ENCODE measurements at regions of chr6 and their contacts with region 1.

Region 1: DNA sequence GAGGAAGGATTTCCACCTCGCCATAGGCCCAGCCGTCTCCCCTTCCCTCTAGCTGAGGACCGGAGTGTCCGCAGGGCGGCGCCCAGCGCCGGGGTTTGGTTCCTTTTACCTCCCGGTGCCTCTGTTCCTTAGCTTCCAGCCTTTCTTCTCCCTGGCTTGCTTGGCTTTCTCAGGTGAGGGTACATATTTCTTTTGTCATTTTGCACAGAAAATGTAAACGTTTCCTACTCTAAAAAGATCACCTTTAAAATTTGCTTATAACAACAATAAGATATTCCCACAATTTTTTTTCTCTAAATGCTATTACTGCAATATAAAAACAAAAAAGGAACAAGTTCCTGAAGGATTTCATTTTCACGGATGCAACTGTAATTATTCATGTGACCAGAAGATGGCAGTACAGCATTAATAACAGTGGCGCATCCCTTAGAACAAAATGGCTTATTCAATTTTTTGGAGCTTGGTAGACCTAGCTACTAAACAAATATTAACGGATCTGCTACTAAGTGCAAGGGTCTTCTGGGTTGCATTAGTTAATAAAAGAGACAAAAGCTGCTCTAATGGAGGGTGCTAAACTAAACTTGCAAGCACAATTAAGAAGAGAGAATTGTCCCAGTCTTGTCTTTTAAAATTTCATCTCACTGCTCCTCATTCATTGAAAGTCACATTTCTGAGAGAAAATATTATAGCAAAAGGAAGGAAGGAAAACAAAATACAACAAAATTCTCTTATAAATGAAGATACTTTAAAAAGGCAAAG is 172.9 kb downstream of the ADGRG6 start:
- DNase-seq: peak in 2 of 9 experiments; percentile 51 to 64
- ATAC-seq: peak; percentile 51
- H3K4me3 ChIP-seq: no peak overlapping the region
- H3K4me3 Mint-ChIP-seq: no peak overlapping the region
- H3K27ac ChIP-seq: no peak overlapping the region
- H3K27ac Mint-ChIP-seq: no peak overlapping the region
- H3K4me1 ChIP-seq: no peaks in the 10 kb centered on the region
- H3K4me1 Mint-ChIP-seq: peaks cover 1% of the 10 kb centered on the region
- H3K27me3 ChIP-seq: no peaks in the 10 kb centered on the region
- H3K27me3 Mint-ChIP-seq: no peaks in the 10 kb centered on the region
- CTCF ChIP-seq: peak; percentile 98

Region 2: GRCh38 chr6:142459271-142459670 is 15.4 kb before region 1 on chr6:
- CTCF ChIA-PET with region 1: interaction called, 10 read pairs
- POLR2A ChIA-PET with region 1: no interaction called
- intact Hi-C with region 1: no loop called
- DNase-seq: no peak
- ATAC-seq: no peak
- H3K4me3 ChIP-seq: no peak overlapping the region
- H3K4me3 Mint-ChIP-seq: no peak overlapping the region
- H3K27ac ChIP-seq: no peak overlapping the region
- H3K27ac Mint-ChIP-seq: no peak overlapping the region
- H3K4me1 ChIP-seq: no peaks in the 10 kb centered on the region
- H3K4me1 Mint-ChIP-seq: no peaks in the 10 kb centered on the region
- H3K27me3 ChIP-seq: no peaks in the 10 kb centered on the region
- H3K27me3 Mint-ChIP-seq: peaks cover 3% of the 10 kb centered on the region
- CTCF ChIP-seq: no peak

Region 3: GRCh38 chr6:142686507-142686887 is 211.8 kb after region 1 on chr6:
- CTCF ChIA-PET with region 1: interaction called, 8 read pairs
- POLR2A ChIA-PET with region 1: no interaction called
- intact Hi-C with region 1: loop called in 1 of 2 experiments (anchors 5 kb)
- DNase-seq: no peak
- ATAC-seq: peak; percentile 19
- H3K4me3 ChIP-seq: no peak overlapping the region
- H3K4me3 Mint-ChIP-seq: peak overlapping the region; percentile 30
- H3K27ac ChIP-seq: no peak overlapping the region
- H3K27ac Mint-ChIP-seq: peak overlapping the region; percentile 72
- H3K4me1 ChIP-seq: peaks cover 18% of the 10 kb centered on the region
- H3K4me1 Mint-ChIP-seq: peaks cover 22% of the 10 kb centered on the region
- H3K27me3 ChIP-seq: no peaks in the 10 kb centered on the region
- H3K27me3 Mint-ChIP-seq: no peaks in the 10 kb centered on the region
- CTCF ChIP-seq: no peak

Region 4: GRCh38 chr6:143026696-143027449 is 552.2 kb after region 1 on chr6:
- CTCF ChIA-PET with region 1: interaction called, 3 read pairs
- POLR2A ChIA-PET with region 1: no interaction called
- intact Hi-C with region 1: loop called (anchors 1 to 2 kb)
- DNase-seq: peak; percentile 10 to 68 (median 55)
- ATAC-seq: peak; percentile 67
- H3K4me3 ChIP-seq: no peak overlapping the region
- H3K4me3 Mint-ChIP-seq: no peak overlapping the region
- H3K27ac ChIP-seq: no peak overlapping the region
- H3K27ac Mint-ChIP-seq: no peak overlapping the region
- H3K4me1 ChIP-seq: no peaks in the 10 kb centered on the region
- H3K4me1 Mint-ChIP-seq: no peaks in the 10 kb centered on the region
- H3K27me3 ChIP-seq: no peaks in the 10 kb centered on the region
- H3K27me3 Mint-ChIP-seq: no peaks in the 10 kb centered on the region
- CTCF ChIP-seq: peak; percentile 62

Region 5: DNA sequence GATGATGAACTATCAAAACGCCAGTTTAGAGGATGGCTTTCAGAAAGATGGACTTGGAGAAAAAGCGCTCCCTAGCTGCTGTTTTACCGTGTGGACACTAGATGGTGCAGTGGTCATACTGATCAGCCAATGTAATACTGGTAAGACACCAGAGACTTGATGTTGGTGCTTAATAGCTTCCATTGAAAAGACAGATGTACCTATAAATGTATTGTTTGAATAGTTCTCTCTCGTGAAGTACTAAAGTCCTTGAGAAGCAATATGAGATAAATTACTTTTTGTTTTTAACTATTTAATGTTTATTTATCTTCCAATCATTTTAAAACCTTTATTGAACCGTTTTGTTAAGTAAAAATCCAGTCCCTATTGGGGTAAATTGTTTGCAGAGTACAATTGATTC is 1100.7 kb after region 1 on chr6:
- CTCF ChIA-PET with region 1: interaction called, 6 read pairs
- POLR2A ChIA-PET with region 1: no interaction called
- intact Hi-C with region 1: loop called (anchors 10 kb)
- DNase-seq: peak; percentile 12 to 81 (median 46)
- ATAC-seq: peak; percentile 99
- H3K4me3 ChIP-seq: no peak overlapping the region
- H3K4me3 Mint-ChIP-seq: no peak overlapping the region
- H3K27ac ChIP-seq: no peak overlapping the region
- H3K27ac Mint-ChIP-seq: no peak overlapping the region
- H3K4me1 ChIP-seq: no peaks in the 10 kb centered on the region
- H3K4me1 Mint-ChIP-seq: no peaks in the 10 kb centered on the region
- H3K27me3 ChIP-seq: no peaks in the 10 kb centered on the region
- H3K27me3 Mint-ChIP-seq: no peaks in the 10 kb centered on the region
- CTCF ChIP-seq: peak; percentile 93